Caco-2 (cell line): ENCODE measurements at regions of chr16 and their contacts with region 1.

Region 1: DNA sequence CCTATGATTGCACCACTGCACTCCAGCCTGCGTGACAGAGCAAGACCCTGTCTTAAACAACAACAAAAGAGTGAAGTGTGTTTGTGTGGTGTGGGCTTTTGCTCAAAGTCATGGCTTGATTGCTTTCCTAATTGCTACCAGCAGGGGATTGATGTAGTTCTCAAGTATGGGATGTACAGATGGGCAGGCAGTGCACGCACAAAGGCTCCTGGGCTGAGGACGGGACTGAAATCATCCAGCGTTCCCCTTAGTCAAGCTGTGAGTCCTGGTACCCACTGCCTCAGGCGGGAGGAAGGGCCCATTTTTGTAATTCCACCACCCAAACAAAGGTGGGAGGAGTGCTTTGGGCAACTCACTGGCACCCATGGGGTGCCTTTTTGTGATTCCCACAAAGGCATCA is 47.3 kb downstream of the GDE1 start:
- DNase-seq: no peak
- H3K4me3 ChIP-seq: no peak overlapping the region
- H3K4me3 Mint-ChIP-seq: no peak overlapping the region
- H3K27ac Mint-ChIP-seq: no peak overlapping the region
- H3K4me1 ChIP-seq: no peaks in the 10 kb centered on the region
- H3K4me1 Mint-ChIP-seq: no peaks in the 10 kb centered on the region
- H3K27me3 ChIP-seq: no peaks in the 10 kb centered on the region
- H3K27me3 Mint-ChIP-seq: no peaks in the 10 kb centered on the region
- CTCF ChIP-seq: no peak

Region 2: GRCh38 chr16:19382887-19383816 is 91.5 kb before region 1 on chr16:
- CTCF ChIA-PET with region 1: no interaction called
- POLR2A ChIA-PET with region 1: no interaction called
- intact Hi-C with region 1: no loop called
- DNase-seq: no peak
- H3K4me3 ChIP-seq: no peak overlapping the region
- H3K4me3 Mint-ChIP-seq: no peak overlapping the region
- H3K27ac Mint-ChIP-seq: no peak overlapping the region
- H3K4me1 ChIP-seq: peaks cover 4% of the 10 kb centered on the region; the same call in 1 of the 2 replicates
- H3K4me1 Mint-ChIP-seq: peaks cover 8% of the 10 kb centered on the region
- H3K27me3 ChIP-seq: no peaks in the 10 kb centered on the region
- H3K27me3 Mint-ChIP-seq: no peaks in the 10 kb centered on the region
- CTCF ChIP-seq: no peak

Region 3: DNA sequence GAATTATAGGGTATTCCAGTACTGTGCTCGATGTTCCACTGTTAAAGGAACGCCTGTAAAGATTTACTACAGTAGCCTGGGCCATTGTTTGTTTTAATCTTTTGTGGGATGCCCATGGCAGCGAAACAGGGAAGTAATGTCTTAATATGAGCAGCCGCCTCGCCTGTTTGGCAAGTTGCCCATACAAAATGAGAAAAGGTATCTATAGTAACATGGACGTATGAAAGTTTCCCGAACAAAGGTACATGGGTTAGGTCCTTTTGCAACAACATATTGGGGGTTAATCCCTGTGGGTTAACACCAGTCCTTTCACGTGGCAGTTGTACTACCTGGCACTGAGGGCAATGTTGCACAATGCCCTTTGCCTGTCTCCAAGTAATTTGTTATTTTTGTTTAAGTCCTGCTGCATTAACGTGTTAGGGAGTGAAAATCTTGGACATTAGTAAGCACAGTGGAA is 78.0 kb before region 1 on chr16:
- CTCF ChIA-PET with region 1: no interaction called
- POLR2A ChIA-PET with region 1: interaction called, 14 read pairs
- intact Hi-C with region 1: no loop called
- DNase-seq: no peak
- H3K4me3 ChIP-seq: no peak overlapping the region
- H3K4me3 Mint-ChIP-seq: no peak overlapping the region
- H3K27ac Mint-ChIP-seq: no peak overlapping the region
- H3K4me1 ChIP-seq: peaks cover 21% of the 10 kb centered on the region
- H3K4me1 Mint-ChIP-seq: peaks cover 5% of the 10 kb centered on the region
- H3K27me3 ChIP-seq: no peaks in the 10 kb centered on the region
- H3K27me3 Mint-ChIP-seq: no peaks in the 10 kb centered on the region
- CTCF ChIP-seq: no peak